Cardiac septum (tissue), 1 donor: ENCODE measurements at regions of chr14 and their contacts with region 1.

Region 1: DNA sequence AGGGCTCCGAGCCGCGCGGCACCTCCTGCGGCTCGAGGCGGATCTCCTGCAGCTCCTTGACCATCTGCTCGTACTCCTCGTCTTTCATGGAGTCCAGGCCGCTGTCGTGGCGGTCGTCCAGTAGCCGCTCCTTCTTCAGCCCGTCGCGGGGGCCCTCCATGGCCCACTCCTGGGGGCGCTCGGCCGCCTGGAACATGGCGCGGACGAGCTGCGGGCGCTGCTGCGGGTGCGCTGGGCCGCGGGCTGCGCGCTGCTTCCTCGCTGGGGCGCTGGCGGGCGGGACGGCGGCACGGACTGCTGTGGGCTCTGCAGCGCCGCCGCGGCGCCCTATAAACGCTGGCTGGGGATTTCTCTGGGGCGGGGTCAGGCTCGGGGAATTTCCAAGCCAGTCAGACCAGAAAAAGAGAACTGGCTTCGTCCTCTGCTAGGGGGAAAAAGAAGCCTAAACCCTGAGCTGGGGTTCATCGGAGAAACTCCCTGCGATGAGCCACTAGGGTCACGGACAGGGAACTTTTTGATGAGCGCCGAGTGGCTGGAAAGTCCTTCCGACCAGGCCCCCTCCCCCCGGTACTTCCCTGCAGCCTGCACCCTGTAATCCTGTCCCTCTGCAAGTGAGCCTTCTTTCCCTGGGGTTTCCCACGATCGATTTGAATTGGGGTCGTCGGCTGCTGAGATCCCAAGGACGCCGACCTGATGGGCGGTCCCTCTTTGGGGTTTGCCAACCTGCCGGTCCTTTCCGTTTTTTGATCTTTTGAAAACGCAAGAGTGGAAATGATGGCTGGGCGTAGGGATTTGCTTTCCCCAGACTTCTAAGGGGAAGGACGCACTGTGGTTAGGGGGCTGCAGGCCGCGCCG is at the start of gene NFKBIA:
- DNase-seq: peak; percentile 96
- total RNA-seq, gene NFKBIA: 42.7 TPM

Region 2: DNA sequence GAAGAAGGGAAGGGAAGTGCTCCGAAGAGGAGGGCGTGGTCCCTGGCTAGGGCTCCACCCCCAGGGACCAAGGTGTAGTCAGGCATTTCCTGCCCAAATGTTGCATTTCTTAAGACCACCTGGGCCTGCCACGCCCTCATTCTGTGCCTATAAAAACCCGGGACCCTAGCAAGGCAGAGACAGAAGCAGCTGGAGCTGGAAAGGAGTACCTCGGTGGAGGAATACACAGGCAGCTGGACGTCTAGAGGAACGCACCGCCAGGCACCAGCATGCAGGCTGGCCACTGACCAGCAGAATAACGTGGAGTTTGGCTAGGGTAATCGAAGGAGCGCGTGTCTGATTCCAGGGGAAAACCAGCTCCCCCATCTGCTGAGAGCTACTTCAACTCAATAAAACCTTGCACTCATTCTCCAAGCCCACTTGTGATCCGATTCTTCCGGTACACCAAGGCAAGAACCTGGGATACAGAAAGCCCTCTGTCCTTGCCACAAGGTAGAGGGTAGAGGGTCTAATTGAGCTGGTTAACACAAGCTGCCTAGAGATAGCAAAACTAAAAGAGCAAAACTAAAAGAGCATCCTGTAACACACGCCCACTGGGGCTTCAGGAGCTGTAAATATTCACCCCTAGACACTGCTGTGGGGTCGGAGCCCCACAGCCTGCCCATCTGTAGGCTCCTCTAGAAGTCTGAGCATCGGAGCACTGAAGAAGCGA is 711.3 kb before region 1 on chr14:
- intact Hi-C with region 1: no loop called
- DNase-seq: no peak

Region 3: DNA sequence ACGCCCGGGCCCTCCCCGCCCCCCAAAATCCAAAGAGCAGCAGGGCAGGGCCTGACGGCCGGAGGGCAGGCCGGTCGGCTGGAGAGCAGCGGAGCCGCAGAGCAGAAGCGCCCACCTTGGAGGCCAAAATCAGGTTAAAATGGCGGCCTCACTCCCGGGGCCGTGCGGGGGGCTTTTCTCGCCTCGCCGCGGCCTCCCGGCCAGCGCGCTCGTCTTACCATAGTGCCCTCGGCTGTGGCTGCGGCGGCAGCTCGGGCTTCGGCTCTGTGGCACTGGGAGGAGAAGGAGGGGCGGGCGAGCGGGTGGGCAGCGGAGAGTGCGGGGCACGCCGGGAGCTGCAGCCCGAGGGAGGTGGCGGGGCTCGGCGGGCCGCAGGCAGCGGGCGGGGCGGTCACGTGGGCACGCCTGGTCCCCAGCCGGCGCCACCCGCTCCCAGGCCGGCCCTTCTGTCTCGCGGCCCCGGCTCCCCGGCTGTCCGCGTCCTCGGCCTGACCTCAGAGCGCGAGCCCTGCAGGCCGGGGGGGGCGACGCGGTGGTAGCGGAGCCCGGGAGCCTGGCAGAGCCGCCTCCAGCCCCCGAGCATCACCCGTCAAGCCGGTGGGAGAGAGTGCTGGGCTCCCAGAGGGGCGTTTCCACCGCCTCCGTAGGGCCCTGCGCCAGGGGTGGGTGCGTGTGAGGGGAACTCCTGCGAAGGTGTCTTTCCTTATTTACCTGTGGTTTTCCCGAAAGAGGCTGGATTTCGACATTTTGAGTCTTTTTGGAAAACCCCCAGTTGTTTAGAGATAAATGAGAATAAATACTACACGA is 690.2 kb before region 1 on chr14 and contains the start of gene CFL2:
- intact Hi-C with region 1: loop called (anchors 10 kb)
- DNase-seq: peak; percentile 91
- total RNA-seq, gene CFL2: 673 TPM

Region 4: DNA sequence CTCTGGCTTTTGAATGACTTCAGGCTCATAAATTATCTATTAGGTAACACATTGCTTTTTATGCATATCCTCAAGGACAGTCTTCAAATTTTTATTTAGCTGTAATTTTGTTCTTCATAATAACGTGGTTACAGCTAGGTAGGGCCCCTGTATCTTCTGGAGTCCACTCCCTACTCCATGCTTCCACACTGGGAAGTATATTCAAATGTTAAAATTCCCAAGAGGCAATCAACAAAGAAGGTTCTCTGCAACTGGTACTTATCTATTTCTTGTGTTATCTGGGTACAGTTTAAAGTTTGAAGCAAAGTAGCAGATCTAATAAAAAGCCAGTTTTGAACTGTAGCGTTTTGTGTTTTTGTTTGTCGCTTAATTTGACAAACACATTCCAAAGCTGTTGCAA is 509.4 kb before region 1 on chr14:
- intact Hi-C with region 1: no loop called
- DNase-seq: no peak

Region 5: GRCh38 chr14:35222872-35223466 is 181.7 kb before region 1 on chr14:
- intact Hi-C with region 1: loop called (anchors 5 kb)
- DNase-seq: no peak

Region 6: GRCh38 chr14:35341446-35342159 is 63.1 kb before region 1 on chr14:
- intact Hi-C with region 1: loop called (anchors 1 kb)
- DNase-seq: peak; percentile 95

Region 7: DNA sequence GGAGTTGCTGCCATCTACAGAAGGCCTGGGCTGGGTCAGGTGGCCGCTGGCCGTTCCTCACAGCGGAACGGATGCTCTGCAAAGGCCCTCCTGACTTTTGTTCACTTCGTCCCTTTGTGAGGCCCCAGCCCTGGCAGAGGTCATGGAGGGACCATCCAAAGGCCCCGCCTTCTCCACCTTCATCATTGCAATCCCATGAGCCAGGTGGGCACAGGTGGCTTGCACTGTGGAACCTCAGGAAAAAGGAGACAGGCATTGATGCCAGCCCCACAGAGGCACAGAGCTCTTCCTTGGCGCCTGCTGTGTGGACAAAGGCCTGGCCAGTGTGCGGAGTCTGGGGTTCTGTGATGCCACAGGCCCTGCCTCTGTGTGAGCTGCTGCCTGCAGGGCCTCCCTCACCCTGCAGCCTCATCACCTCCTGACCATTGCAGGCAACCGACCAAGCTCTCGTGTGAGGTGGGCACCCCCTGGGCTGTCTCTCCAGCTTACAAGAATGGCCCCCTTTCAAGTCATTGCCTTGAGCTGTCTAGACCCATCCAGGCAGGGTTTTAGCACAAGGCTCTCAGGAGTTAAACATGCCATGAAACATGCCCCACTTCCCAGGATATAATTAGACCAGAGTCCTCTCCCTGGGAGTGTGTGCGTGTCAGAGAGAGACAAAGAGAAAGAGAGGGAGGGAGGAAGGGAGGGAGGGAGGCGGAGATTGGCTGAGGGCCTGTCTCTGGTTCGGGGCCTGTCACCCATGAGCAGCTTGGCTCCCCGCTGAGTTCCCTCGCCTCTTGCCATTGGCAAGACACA is 19.4 kb before region 1 on chr14:
- intact Hi-C with region 1: loop called (anchors 1 kb)
- DNase-seq: peak; percentile 86